BJ (cell line): ENCODE measurements at regions of chr2 and their contacts with region 1.

Region 1: DNA sequence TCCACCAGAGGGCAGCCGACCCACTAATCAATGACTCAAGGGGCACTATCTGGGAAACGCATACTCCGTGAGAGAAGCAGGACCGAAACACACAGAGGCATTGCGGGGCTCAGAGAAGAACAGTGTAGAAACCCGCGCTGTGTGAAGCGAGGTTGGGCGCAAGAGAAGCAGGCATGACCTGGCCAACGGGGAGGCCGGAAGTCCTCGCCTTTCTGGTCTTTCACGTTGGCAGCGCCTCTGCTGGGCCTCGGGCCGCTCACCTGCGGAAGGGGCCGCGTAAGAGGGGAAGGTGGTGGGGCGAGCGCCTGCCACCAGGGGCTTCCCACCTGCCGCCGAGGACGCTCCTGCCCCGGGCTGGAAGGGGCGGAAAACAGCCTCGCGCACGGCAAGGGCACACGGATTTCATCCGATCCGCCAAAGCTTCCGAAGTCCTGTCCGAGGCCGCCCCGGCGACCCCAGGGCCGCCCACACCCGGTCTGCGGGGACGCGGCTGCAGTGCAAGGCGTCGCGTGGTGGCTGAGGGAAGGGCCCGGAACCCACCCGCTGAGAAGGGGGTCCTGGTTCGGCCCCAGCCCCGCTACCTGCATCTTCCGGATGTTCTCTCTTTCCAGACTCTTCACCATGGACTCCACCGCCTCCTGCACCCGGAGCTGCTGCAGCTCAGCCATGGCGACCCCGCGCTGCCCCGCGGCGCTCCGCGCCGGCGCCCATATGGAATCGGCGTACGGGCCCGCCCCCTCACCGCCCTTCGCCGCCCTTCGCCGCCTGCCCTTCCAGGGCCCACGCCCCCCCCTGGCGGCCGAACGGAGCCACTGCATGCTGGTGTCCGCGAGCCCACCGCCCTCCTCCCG is at the start of gene FAM136A:
- DNase-seq: no peak
- H3K4me3 ChIP-seq: peak within 1 kb of the TSS; percentile 97
- H3K27me3 ChIP-seq: no peaks in the 10 kb centered on the region
- CTCF ChIP-seq: peak; percentile 87
- polyA plus RNA-seq, gene FAM136A: 22.9 and 28.3 TPM in 2 replicates

Region 2: GRCh38 chr2:69914170-69914960 is 387.2 kb before region 1 on chr2:
- CTCF ChIA-PET with region 1: interaction called, 22 read pairs
- POLR2A ChIA-PET with region 1: interaction called, 3 read pairs
- DNase-seq: peak; percentile 100
- H3K4me3 ChIP-seq: peak overlapping the region; percentile 78
- H3K27me3 ChIP-seq: no peaks in the 10 kb centered on the region
- CTCF ChIP-seq: peak; percentile 18; the same call in 1 of the 2 replicates

Region 3: GRCh38 chr2:70029814-70030409 is 271.7 kb before region 1 on chr2:
- CTCF ChIA-PET with region 1: no interaction called
- POLR2A ChIA-PET with region 1: no interaction called
- DNase-seq: no peak
- H3K4me3 ChIP-seq: no peak overlapping the region
- H3K27me3 ChIP-seq: no peaks in the 10 kb centered on the region
- CTCF ChIP-seq: no peak

Region 4: DNA sequence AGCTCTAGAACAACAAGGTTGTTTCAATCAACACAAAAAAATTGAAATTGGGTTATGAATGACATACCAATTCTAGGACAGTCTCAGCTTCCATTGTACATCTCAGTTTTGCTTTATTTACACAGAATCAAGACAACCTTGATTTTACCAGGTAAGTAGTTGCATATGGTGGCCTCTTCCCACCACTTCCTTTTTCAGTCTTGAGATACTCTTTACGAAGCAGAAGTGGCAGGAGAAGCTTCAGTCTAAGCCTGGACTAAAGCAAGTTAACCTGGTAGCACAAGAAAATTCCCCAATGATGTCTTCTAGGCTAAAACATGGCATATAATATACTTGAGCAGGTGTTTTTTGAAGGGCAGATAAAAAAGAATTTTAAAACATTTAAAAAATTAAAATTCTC is 11.0 kb after region 1 on chr2:
- CTCF ChIA-PET with region 1: interaction called, 22 read pairs
- POLR2A ChIA-PET with region 1: no interaction called
- DNase-seq: no peak
- H3K4me3 ChIP-seq: no peak overlapping the region
- H3K27me3 ChIP-seq: peaks cover 4% of the 10 kb centered on the region
- CTCF ChIP-seq: no peak

Region 5: GRCh38 chr2:70639841-70640436 is 338.4 kb after region 1 on chr2:
- CTCF ChIA-PET with region 1: interaction called, 30 read pairs
- POLR2A ChIA-PET with region 1: no interaction called
- DNase-seq: no peak
- H3K4me3 ChIP-seq: no peak overlapping the region
- H3K27me3 ChIP-seq: peaks cover 3% of the 10 kb centered on the region; the same call in 1 of the 2 replicates
- CTCF ChIP-seq: no peak

Region 6: DNA sequence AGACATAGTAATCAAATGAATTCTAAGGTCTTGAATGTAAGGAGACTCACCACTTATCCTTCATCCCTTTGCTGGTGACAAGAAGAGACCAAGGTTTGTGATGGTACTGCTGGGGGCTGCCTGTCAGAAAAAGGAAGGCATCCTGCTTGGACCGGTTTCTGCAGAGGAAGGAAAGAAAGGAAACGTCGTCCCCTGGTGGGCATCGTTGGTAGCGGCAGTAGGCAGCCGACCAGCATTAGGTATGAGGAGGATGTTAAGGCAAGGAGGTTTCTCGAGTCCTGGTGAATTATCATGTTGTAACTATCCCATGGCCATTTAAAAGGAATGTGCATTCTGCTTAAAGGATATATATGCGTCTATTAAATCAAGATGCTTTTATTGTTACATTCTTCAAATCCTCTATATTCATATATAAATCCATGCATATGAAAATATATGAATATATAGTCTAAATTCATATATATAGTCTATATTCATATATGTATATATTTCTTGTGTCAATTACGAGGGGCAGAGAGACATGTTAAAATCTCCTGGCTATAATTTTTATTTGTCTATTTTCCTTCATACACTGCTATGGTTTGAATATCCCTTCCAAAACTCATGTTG is 346.4 kb after region 1 on chr2:
- CTCF ChIA-PET with region 1: interaction called, 59 read pairs
- POLR2A ChIA-PET with region 1: no interaction called
- DNase-seq: peak; percentile 3
- H3K4me3 ChIP-seq: no peak overlapping the region
- H3K27me3 ChIP-seq: no peaks in the 10 kb centered on the region
- CTCF ChIP-seq: peak; percentile 100